Panc1 (cell line): ENCODE measurements at regions of chr1 and their contacts with region 1.

Region 1: GRCh38 chr1:25997828-25998761 is at the start of gene PAFAH2:
- DNase-seq: peak; percentile 99
- ATAC-seq: peak; percentile 99
- H3K4me3 ChIP-seq: peak within 1 kb of the TSS; percentile 78 to 89
- H3K27ac ChIP-seq: peak within 1 kb of the TSS; percentile 99
- H3K4me1 ChIP-seq: peaks cover 12% of the 10 kb centered on the region
- H3K27me3 ChIP-seq: no peaks in the 10 kb centered on the region
- CTCF ChIP-seq: peak; percentile 97
- total RNA-seq, gene PAFAH2: 8.5 TPM

Region 2: DNA sequence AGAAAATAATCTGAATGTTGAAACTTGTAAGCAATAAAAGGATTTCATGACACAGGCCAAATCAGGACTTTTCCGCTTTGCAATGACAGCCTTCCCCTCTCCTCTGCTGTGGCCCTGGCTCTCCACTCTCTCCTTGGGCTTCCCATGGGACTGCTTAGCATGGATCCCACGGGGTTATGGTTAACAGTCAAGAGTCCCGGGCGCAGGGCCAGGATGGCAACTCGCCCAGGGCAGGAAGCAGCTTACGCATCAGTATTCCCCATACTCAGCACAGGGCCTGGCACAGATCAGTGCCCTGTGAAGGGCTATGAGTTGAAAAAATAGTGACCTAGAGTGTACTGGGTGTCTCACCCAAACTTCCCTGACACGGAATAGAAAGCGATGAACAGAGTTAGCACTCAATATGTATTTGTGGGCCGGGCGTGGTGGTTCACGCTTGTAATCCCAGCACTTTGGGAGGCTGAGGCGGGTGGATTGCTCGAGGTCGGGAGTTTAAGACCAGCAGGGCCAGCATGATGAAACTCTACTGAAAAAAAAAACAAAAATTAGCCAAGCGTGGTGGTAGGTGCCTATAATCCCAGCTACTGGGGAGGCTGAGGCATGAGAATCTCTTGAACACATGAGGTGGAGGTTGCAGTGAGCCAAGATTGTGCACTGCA is 1708.0 kb before region 1 on chr1:
- CTCF ChIA-PET with region 1: interaction called, 13 read pairs
- POLR2A ChIA-PET with region 1: no interaction called
- in situ Hi-C with region 1: no loop called
- intact Hi-C with region 1: no loop called
- DNase-seq: peak; percentile 78
- ATAC-seq: peak; percentile 89
- H3K4me3 ChIP-seq: no peak overlapping the region
- H3K27ac ChIP-seq: peak overlapping the region; percentile 46
- H3K4me1 ChIP-seq: peaks cover 26% of the 10 kb centered on the region
- H3K27me3 ChIP-seq: no peaks in the 10 kb centered on the region
- CTCF ChIP-seq: no peak

Region 3: DNA sequence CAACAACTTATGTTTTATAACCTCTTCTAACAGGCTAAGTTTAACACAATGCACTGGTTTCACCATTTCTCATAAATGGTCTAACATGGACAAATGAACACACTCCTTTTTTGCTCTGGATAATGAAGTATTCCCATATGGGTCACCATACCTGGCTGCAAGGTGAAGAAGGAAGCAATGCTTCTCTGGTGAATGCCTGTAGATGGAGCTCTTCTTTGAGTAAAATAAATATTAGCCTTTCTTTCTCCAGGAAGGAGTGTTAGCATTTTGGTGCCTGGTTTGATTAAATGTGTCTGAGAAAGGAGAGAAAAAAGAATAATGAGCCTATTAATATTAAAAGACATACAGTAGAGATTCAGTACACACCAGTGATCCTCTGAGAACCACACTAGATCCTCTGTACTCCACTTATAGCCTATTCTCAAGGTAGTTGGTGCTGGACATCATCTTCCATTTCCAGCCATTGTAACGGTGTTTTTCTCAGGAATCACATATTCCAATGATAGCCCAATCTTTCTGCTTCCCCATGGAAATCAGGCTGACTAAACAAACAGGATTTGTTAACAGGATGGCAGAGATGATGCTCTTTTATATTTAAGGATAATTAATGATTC is 160.7 kb before region 1 on chr1:
- CTCF ChIA-PET with region 1: no interaction called
- POLR2A ChIA-PET with region 1: no interaction called
- in situ Hi-C with region 1: no loop called
- intact Hi-C with region 1: loop called (anchors 10 kb)
- DNase-seq: no peak
- ATAC-seq: no peak
- H3K4me3 ChIP-seq: no peak overlapping the region
- H3K27ac ChIP-seq: no peak overlapping the region
- H3K4me1 ChIP-seq: peaks cover 5% of the 10 kb centered on the region; the same call in 1 of the 2 replicates
- H3K27me3 ChIP-seq: no peaks in the 10 kb centered on the region
- CTCF ChIP-seq: peak; percentile 63; the same call in 1 of the 2 replicates

Region 4: DNA sequence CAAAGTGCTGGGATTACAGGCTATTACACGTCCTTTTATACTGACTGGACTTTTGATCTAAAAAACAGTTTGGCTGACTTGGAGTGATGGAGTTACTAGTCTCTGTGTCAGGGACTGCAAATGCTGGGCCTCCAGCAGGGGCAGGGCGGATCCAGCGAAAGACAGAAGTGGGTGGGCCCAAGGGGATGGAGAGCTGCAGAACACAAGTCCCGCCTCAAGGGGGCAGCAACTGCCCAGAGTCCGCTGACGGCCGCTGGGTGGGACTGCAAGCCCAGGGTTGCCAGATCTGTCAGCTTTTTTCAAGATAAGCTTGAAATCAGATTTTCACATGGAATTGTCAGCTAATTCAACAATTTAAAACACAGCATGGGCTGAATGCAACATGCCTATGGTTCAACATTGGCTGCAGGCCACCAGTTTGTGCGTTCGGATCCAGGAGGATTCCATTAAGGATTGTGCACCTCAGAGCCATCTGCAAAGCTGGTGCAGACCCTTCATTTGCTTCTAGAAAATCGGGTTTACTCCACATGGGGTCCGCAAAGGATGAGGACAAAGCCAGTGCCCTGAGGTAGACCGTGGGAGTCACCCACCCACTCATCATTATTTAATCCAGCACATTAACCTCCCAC is 102.6 kb before region 1 on chr1:
- CTCF ChIA-PET with region 1: interaction called, 56 read pairs
- POLR2A ChIA-PET with region 1: interaction called, 14 read pairs
- in situ Hi-C with region 1: loop called (anchors 5 kb)
- intact Hi-C with region 1: loop called (anchors 1 kb)
- DNase-seq: peak; percentile 64
- ATAC-seq: peak; percentile 81
- H3K4me3 ChIP-seq: no peak overlapping the region
- H3K27ac ChIP-seq: peak overlapping the region; percentile 74
- H3K4me1 ChIP-seq: peaks cover 47% of the 10 kb centered on the region
- H3K27me3 ChIP-seq: no peaks in the 10 kb centered on the region
- CTCF ChIP-seq: peak; percentile 98

Region 5: DNA sequence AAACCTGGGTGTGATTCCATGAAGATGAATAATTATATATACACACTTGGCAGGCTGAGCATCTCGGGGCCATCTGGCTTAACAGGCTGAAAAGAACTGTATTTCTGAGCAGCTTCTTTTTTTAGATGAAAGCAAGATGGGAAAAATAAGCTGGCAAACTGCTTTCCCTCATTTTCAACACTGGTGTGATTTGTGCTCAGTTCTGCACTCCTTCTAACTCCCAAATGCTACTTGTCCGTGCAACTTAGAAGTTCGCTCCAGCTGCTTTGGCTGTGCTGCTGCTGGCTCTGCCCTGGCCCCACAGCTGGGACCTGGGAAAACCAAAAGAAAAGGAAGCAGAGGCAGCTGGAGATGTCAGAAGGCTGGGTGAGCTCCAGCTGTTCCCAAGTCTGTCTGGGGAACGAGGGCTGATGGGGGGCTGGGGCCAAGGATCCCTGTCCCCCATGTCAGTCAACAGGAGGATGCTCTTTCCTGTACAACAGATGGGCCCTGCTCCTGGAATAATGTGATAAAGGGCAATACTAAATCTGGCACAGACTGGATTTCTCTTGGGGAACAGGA is 45.2 kb before region 1 on chr1:
- CTCF ChIA-PET with region 1: interaction called, 12 read pairs
- POLR2A ChIA-PET with region 1: no interaction called
- in situ Hi-C with region 1: no loop called
- intact Hi-C with region 1: no loop called
- DNase-seq: no peak
- ATAC-seq: no peak
- H3K4me3 ChIP-seq: no peak overlapping the region
- H3K27ac ChIP-seq: no peak overlapping the region
- H3K4me1 ChIP-seq: no peaks in the 10 kb centered on the region
- H3K27me3 ChIP-seq: no peaks in the 10 kb centered on the region
- CTCF ChIP-seq: no peak

Region 6: DNA sequence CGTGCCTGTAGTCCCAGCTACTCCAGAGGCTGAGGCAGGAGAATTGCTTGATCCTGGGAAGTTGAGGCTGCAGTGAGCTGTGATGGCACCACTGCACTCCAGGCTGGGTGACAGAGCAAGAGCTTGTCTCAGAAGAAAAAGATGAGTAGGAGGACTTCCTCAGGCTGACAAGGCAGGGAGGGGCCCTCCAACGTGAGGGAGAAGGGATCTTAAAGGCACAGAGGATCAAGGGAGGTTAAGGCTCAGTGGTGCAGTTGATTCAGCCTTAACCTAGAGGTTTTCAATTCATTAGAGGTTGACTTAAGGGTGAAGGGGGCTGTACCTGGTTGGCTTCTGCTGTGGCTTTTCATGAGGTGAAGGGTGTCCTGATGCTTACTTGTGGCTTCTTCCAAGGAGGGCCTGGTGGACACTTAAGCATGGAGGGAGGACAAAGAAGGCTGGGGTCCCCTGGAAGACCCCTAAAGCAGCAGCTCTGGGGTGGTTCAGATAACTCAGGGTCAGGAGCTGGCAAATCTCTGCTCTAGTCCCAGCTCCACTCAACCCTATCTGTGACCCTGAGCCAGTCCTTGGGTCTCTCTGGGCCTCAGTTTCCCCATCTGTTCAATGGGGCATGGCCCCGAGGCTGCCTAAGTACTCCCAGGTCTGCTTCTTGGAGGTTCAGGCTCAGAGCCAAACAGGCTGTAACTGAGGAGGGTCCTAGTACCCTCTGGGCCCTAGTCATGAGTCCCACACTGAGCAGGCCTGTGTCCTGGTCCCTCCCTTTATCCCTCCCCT is 29.8 kb after region 1 on chr1:
- CTCF ChIA-PET with region 1: interaction called, 11 read pairs
- POLR2A ChIA-PET with region 1: no interaction called
- in situ Hi-C with region 1: no loop called
- intact Hi-C with region 1: no loop called
- DNase-seq: no peak
- ATAC-seq: peak; percentile 31
- H3K4me3 ChIP-seq: no peak overlapping the region
- H3K27ac ChIP-seq: no peak overlapping the region
- H3K4me1 ChIP-seq: peaks cover 5% of the 10 kb centered on the region; the same call in 1 of the 2 replicates
- H3K27me3 ChIP-seq: no peaks in the 10 kb centered on the region
- CTCF ChIP-seq: no peak

Region 7: DNA sequence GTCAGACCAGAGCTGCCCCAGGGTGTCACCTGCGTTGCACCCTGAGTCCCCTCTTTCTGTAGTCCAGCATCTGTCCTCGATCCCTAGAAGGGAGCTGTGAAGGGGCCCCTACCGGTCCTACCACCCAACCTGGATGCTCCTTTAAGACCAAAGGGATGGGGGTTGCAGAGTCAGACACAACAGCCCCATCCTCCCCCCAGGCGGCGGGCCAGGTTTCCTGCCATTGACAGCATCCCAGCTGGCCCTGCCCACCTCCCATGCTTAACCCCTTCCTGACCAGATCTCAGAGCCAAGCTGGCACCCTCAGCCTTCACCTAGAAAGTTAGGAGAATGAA is 158.6 kb after region 1 on chr1:
- CTCF ChIA-PET with region 1: no interaction called
- POLR2A ChIA-PET with region 1: no interaction called
- in situ Hi-C with region 1: no loop called
- intact Hi-C with region 1: no loop called
- DNase-seq: no peak
- ATAC-seq: no peak
- H3K4me3 ChIP-seq: no peak overlapping the region
- H3K27ac ChIP-seq: no peak overlapping the region
- H3K4me1 ChIP-seq: peaks cover 6% of the 10 kb centered on the region; the same call in 1 of the 2 replicates
- H3K27me3 ChIP-seq: no peaks in the 10 kb centered on the region
- CTCF ChIP-seq: no peak